Activated B cell treated with CpG ODN at 0.5 μM for 24 hours (primary cell): ENCODE measurements at regions of chr3 and their contacts with region 1.

Region 1: DNA sequence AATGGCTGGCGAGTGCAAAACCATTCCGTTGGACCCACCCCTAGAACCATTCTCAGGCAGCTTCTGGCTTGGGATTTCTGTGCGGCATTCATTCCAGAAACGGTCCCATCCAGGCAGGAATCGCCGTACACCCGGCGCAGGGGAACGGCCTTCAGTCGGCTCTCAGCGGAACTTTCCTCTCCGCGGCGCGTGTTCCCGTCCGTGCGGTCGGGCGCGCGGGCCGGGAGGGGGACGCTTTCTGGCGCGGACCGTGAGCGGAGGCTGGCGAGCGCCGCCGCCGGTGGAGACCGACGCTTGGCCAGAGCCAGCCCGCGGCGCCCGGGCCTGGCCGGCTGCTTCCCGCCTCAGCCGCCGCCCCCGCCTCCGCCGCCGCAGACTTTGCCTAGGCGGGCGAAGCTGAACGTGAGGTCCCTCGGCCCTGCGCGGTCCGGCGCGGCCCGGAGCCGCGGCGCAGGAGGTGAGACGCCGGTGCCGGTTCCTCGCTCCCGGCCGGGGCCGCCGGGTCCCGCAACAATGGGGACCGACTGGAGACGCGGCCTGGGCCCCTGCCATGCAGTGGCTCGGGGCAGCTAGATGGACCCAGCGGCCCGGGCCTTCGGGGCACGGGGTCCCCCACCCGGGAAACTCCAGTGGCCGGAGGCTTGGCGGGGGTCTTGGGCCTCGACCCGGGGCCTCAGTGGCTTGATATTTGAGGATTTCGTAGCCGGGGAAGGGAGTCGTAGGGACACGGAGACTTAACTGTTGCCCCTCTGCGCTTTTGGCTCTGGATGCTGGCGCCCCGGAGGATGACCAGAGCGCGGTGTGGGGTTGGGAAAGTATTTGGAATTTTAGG is at the start of gene RAD54L2:
- DNase-seq: peak; percentile 80
- ATAC-seq: peak; percentile 90
- H3K4me3 Mint-ChIP-seq: peak within 1 kb of the TSS; percentile 90
- H3K27ac Mint-ChIP-seq: peak within 1 kb of the TSS; percentile 91
- H3K4me1 Mint-ChIP-seq: peaks cover 45% of the 10 kb centered on the region
- H3K27me3 Mint-ChIP-seq: no peaks in the 10 kb centered on the region
- CTCF ChIP-seq: no peak
- total RNA-seq, gene RAD54L2: 34.3 and 39.3 TPM in 2 replicates

Region 2: DNA sequence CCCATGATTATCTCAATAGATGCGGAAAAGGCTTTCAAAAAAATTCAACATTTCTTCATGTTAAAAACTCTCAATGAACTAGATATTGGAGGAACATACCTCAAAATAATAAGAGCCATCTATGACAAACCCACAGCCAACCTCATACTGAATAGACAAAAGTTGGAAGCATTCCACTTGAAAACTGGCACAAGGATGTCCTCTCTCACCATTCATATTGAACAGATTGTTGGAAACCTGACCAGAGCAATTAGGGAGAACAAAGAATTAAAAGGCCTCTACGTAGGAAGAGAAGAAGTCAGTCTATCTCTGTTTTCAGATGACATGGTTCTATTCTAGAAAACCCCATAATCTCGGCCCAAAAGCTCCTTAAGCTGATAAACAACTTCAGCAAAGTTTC is 428.1 kb before region 1 on chr3:
- CTCF ChIA-PET with region 1: no interaction called
- POLR2A ChIA-PET with region 1: no interaction called
- intact Hi-C with region 1: no loop called
- DNase-seq: no peak
- ATAC-seq: no peak
- H3K4me3 Mint-ChIP-seq: no peak overlapping the region
- H3K27ac Mint-ChIP-seq: no peak overlapping the region
- H3K4me1 Mint-ChIP-seq: no peaks in the 10 kb centered on the region
- H3K27me3 Mint-ChIP-seq: peaks cover 3% of the 10 kb centered on the region
- CTCF ChIP-seq: no peak

Region 3: GRCh38 chr3:51519848-51520247 is 18.8 kb before region 1 on chr3:
- CTCF ChIA-PET with region 1: interaction called, 3 read pairs
- POLR2A ChIA-PET with region 1: interaction called, 4 read pairs
- intact Hi-C with region 1: loop called (anchors 1 kb)
- DNase-seq: no peak
- ATAC-seq: no peak
- H3K4me3 Mint-ChIP-seq: no peak overlapping the region
- H3K27ac Mint-ChIP-seq: peak overlapping the region; percentile 41
- H3K4me1 Mint-ChIP-seq: peaks cover 27% of the 10 kb centered on the region
- H3K27me3 Mint-ChIP-seq: no peaks in the 10 kb centered on the region
- CTCF ChIP-seq: no peak

Region 4: GRCh38 chr3:51670823-51671733 is 132.4 kb after region 1 on chr3 and contains the start of gene TEX264:
- CTCF ChIA-PET with region 1: no interaction called
- POLR2A ChIA-PET with region 1: interaction called, 10 read pairs
- intact Hi-C with region 1: no loop called
- DNase-seq: peak; percentile 95
- ATAC-seq: peak; percentile 85
- H3K4me3 Mint-ChIP-seq: peak within 1 kb of the TSS; percentile 89
- H3K27ac Mint-ChIP-seq: peak within 1 kb of the TSS; percentile 89
- H3K4me1 Mint-ChIP-seq: peaks cover 55% of the 10 kb centered on the region
- H3K27me3 Mint-ChIP-seq: no peaks in the 10 kb centered on the region
- CTCF ChIP-seq: no peak
- total RNA-seq, gene TEX264: 24.1 and 24.4 TPM in 2 replicates